ENCODE measurements at regions of chr11 and their contacts with region 1.

Region 1: DNA sequence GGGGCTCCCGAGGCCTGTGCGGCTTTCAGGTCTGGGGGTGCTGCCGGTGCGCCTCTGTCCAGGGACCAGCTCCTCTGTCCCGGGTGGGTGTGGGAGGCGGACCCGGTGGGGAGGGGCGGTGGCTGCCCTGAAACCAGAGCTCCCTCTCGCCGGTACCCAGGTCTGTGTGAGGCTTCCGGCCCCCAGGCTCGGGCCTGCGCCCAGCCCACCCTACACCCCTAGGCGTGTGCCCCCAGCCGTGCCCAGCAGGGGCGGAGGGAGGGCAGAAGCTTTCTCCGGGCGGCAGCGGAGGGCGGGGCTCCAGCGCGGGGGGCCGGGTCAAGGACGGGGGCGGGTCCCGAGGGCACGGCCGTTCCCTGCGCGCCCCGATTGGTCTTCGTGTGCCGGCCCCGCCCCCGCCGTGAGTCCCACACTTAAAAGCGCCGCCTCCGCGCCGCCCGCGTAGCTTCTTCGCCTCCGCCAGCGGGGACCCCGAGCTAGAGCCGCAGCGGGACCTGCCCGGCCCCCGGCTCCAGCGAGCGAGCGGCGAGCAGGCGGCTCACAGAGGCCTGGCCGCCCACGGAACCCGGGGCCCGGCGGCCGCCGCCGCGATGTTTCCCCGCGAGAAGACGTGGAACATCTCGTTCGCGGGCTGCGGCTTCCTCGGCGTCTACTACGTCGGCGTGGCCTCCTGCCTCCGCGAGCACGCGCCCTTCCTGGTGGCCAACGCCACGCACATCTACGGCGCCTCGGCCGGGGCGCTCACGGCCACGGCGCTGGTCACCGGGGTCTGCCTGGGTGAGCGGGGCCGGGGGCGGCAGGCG is 616 bp downstream of the PNPLA2 start:
- DNase-seq: peak; percentile 93
- ATAC-seq: peak; percentile 77
- H3K4me3 Mint-ChIP-seq: peak overlapping the region; percentile 80
- H3K27ac Mint-ChIP-seq: peak overlapping the region; percentile 77
- H3K4me1 Mint-ChIP-seq: peaks cover 17% of the 10 kb centered on the region
- H3K27me3 Mint-ChIP-seq: no peaks in the 10 kb centered on the region

Region 2: GRCh38 chr11:832321-833113 is 13.2 kb after region 1 on chr11 and contains the start of gene CD151:
- CTCF ChIA-PET with region 1: interaction called, 9 read pairs
- POLR2A ChIA-PET with region 1: interaction called, 31 read pairs
- DNase-seq: peak; percentile 58
- ATAC-seq: peak; percentile 55
- H3K4me3 Mint-ChIP-seq: peak within 1 kb of the TSS; percentile 42
- H3K27ac Mint-ChIP-seq: no peak within 1 kb of the TSS
- H3K4me1 Mint-ChIP-seq: peaks cover 55% of the 10 kb centered on the region
- H3K27me3 Mint-ChIP-seq: peaks cover 35% of the 10 kb centered on the region
- total RNA-seq, gene CD151: 27.0 to 29.7 TPM

Measured in activated CD8-positive, alpha-beta T cell treated with anti-CD3 and anti-CD28 coated beads, Interleukin-2, amount 10 ng/mL, durations not matched to agents 7 days and 5 days (primary cell).